B cell (primary cell): ENCODE measurements at regions of chr12 and their contacts with region 1.

Region 1: GRCh38 chr12:101759396-101760047 is 20.3 kb upstream of the SYCP3 start:
- DNase-seq: peak; percentile 62
- ATAC-seq: peak; percentile 72
- H3K4me3 ChIP-seq: no peak overlapping the region
- H3K4me3 Mint-ChIP-seq: no peak overlapping the region
- H3K27ac ChIP-seq: no peak overlapping the region
- H3K27ac Mint-ChIP-seq: no peak overlapping the region
- H3K4me1 ChIP-seq: peaks cover 3% of the 10 kb centered on the region in 2 donors
- H3K4me1 Mint-ChIP-seq: peaks cover 20% of the 10 kb centered on the region
- H3K27me3 ChIP-seq: no peaks in the 10 kb centered on the region
- H3K27me3 Mint-ChIP-seq: no peaks in the 10 kb centered on the region
- CTCF ChIP-seq: peak; percentile 89

Region 2: DNA sequence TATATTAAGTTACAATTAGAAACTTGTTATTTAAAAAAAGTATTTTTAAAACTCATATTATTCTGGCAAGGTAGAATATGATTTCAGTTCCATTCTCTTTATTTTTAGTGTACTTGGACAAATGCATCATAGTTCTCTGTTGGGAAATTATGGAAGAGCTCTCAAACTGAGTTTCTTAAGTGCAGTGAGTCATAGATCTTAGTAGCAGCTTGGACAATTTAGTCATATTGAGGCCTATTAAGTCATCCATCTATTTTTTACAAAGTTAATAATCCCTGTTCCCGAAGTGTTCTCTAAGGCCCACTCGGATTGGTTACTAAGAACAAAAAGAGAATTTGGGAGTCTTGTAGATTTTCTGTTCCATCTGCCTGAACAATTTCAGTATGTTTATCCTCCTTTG is 851.0 kb before region 1 on chr12:
- CTCF ChIA-PET with region 1: no interaction called
- POLR2A ChIA-PET with region 1: no interaction called
- intact Hi-C with region 1: no loop called
- DNase-seq: no peak
- ATAC-seq: no peak
- H3K4me3 ChIP-seq: no peak overlapping the region
- H3K4me3 Mint-ChIP-seq: no peak overlapping the region
- H3K27ac ChIP-seq: no peak overlapping the region
- H3K27ac Mint-ChIP-seq: no peak overlapping the region
- H3K4me1 ChIP-seq: no peaks in the 10 kb centered on the region
- H3K4me1 Mint-ChIP-seq: no peaks in the 10 kb centered on the region
- H3K27me3 ChIP-seq: no peaks in the 10 kb centered on the region
- H3K27me3 Mint-ChIP-seq: no peaks in the 10 kb centered on the region
- CTCF ChIP-seq: no peak

Region 3: DNA sequence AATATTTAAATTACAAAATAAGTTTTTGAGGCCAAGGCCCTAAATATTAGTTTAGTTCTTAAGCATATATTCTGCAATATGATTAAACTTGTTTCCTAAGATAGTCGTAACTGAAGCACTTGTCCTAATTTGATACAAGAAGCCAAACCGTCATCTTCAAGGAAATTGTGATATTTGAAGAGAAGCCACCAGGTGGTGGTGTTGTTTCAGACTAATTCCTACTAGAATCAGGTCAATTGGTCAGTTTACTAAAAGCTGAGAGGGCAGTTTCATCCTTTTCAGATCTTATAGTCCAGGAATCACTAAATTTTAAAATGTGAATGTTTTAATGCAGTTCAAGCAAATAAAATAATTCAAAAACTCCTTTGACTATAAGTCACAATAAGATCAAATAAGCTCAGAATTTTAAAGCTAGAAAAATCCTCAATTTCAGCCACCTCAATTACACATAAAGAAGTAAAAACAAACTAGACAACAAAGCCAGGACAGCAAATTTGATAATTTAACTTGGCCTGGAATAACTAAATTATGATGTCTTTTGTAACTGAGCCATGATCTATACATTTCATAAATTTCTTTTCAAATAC is 344.9 kb before region 1 on chr12:
- CTCF ChIA-PET with region 1: interaction called, 14 read pairs
- POLR2A ChIA-PET with region 1: no interaction called
- intact Hi-C with region 1: loop called (anchors 1 kb)
- DNase-seq: peak; percentile 52
- ATAC-seq: no peak
- H3K4me3 ChIP-seq: no peak overlapping the region
- H3K4me3 Mint-ChIP-seq: no peak overlapping the region
- H3K27ac ChIP-seq: no peak overlapping the region
- H3K27ac Mint-ChIP-seq: no peak overlapping the region
- H3K4me1 ChIP-seq: no peaks in the 10 kb centered on the region
- H3K4me1 Mint-ChIP-seq: no peaks in the 10 kb centered on the region
- H3K27me3 ChIP-seq: peaks cover 0 to 3% (median 0%) of the 10 kb centered on the region in 4 experiments
- H3K27me3 Mint-ChIP-seq: peaks cover 5% of the 10 kb centered on the region
- CTCF ChIP-seq: peak; percentile 79

Region 4: DNA sequence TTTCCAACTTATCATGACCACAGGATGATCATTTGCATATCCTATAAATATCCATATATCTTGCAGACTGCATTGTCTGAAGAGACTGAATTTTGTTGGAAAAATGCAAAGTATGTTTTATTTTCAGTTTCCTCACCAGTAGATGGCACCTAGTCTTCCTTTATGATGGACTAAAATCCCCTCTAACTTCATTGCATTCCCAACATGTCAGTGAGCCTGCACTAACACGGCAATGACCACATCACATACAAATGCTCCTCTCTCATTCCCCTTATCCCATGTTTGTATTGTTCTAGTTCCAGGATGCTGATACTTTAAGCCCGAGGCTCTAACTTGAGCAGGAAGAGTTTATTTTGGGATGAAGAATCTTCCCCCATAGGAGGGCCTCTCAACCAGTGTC is 189.5 kb before region 1 on chr12:
- CTCF ChIA-PET with region 1: interaction called, 26 read pairs
- POLR2A ChIA-PET with region 1: no interaction called
- intact Hi-C with region 1: loop called (anchors 1 kb)
- DNase-seq: peak; percentile 53
- ATAC-seq: peak; percentile 33
- H3K4me3 ChIP-seq: peak overlapping the region in 1 of 5 experiments; percentile 22
- H3K4me3 Mint-ChIP-seq: peak overlapping the region; percentile 20
- H3K27ac ChIP-seq: no peak overlapping the region
- H3K27ac Mint-ChIP-seq: no peak overlapping the region
- H3K4me1 ChIP-seq: peaks cover 4 to 7% of the 10 kb centered on the region in 2 donors
- H3K4me1 Mint-ChIP-seq: peaks cover 4% of the 10 kb centered on the region
- H3K27me3 ChIP-seq: peaks cover 0 to 3% (median 0%) of the 10 kb centered on the region in 4 experiments
- H3K27me3 Mint-ChIP-seq: peaks cover 3% of the 10 kb centered on the region
- CTCF ChIP-seq: peak; percentile 59

Region 5: DNA sequence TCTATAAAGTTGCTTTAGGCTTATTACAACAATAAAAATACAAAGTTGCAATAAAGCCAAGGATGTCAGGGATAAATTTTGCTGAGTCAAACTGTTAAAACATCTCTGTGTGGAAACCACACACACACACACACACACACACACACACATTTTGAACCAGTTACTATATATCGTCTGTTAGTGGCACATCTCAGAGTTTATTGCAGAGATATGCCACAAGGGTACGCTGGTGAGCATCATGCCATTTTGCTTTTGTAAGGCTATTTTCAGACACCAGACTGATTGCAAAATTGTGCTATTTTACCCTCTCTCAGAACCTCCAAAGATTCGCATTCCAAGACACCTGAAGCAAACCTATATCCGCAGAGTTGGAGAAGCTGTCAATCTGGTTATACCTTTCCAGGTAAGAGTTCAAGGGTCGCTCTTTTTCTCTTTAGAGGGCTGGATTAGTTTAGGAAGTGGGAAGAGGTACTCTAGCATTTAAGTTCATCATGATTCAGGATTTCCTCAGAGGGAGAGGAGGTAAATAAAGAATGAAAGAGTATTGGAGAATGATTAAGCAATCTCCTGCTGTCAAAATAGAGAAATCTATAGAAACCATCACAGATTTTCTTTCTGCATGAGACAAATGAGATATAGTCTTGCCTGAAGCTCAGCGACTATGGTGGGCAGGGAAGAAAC is 89.4 kb before region 1 on chr12:
- CTCF ChIA-PET with region 1: interaction called, 6 read pairs
- POLR2A ChIA-PET with region 1: no interaction called
- intact Hi-C with region 1: loop called (anchors 1 kb)
- DNase-seq: peak; percentile 73
- ATAC-seq: peak; percentile 60
- H3K4me3 ChIP-seq: no peak overlapping the region
- H3K4me3 Mint-ChIP-seq: peak overlapping the region; percentile 14
- H3K27ac ChIP-seq: no peak overlapping the region
- H3K27ac Mint-ChIP-seq: peak overlapping the region; percentile 50
- H3K4me1 ChIP-seq: peaks cover 22 to 25% of the 10 kb centered on the region in 2 donors
- H3K4me1 Mint-ChIP-seq: peaks cover 22% of the 10 kb centered on the region
- H3K27me3 ChIP-seq: no peaks in the 10 kb centered on the region
- H3K27me3 Mint-ChIP-seq: peaks cover 7% of the 10 kb centered on the region
- CTCF ChIP-seq: peak; percentile 75

Region 6: GRCh38 chr12:101727133-101727532 is 32.4 kb before region 1 on chr12:
- CTCF ChIA-PET with region 1: interaction called, 16 read pairs
- POLR2A ChIA-PET with region 1: no interaction called
- intact Hi-C with region 1: loop called (anchors 5 kb)
- DNase-seq: no peak
- ATAC-seq: no peak
- H3K4me3 ChIP-seq: no peak overlapping the region
- H3K4me3 Mint-ChIP-seq: no peak overlapping the region
- H3K27ac ChIP-seq: no peak overlapping the region
- H3K27ac Mint-ChIP-seq: no peak overlapping the region
- H3K4me1 ChIP-seq: peaks cover 1 to 4% of the 10 kb centered on the region in 2 donors
- H3K4me1 Mint-ChIP-seq: peaks cover 5% of the 10 kb centered on the region
- H3K27me3 ChIP-seq: no peaks in the 10 kb centered on the region
- H3K27me3 Mint-ChIP-seq: no peaks in the 10 kb centered on the region
- CTCF ChIP-seq: no peak

Region 7: DNA sequence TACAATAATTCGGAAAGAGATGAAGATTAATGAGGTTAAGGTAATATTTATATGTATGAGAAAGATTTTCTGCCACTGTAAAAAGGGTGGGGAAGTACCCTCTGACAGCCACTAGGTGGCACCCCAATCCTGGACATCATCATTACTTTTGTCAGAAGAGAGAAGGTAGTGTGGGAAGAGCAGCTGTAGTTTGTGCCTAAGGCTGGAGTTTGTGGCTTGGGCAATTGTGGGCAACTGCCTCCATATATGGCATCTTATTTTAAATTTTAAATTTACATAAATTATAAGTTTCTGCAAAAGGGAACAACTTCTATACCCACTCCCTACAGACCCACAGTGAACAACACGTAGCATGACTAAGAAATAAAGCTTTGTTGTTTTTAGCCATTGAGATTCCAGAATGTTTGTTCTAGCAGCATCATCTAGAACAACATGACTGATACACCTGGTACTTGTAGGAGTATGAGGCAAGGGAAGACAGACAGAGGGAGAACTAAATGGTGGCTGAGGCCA is 14.2 kb after region 1 on chr12:
- CTCF ChIA-PET with region 1: interaction called, 25 read pairs
- POLR2A ChIA-PET with region 1: no interaction called
- intact Hi-C with region 1: no loop called
- DNase-seq: peak; percentile 77
- ATAC-seq: peak; percentile 86
- H3K4me3 ChIP-seq: no peak overlapping the region
- H3K4me3 Mint-ChIP-seq: no peak overlapping the region
- H3K27ac ChIP-seq: no peak overlapping the region
- H3K27ac Mint-ChIP-seq: no peak overlapping the region
- H3K4me1 ChIP-seq: no peaks in the 10 kb centered on the region
- H3K4me1 Mint-ChIP-seq: peaks cover 1% of the 10 kb centered on the region
- H3K27me3 ChIP-seq: no peaks in the 10 kb centered on the region
- H3K27me3 Mint-ChIP-seq: no peaks in the 10 kb centered on the region
- CTCF ChIP-seq: peak; percentile 98

Region 8: DNA sequence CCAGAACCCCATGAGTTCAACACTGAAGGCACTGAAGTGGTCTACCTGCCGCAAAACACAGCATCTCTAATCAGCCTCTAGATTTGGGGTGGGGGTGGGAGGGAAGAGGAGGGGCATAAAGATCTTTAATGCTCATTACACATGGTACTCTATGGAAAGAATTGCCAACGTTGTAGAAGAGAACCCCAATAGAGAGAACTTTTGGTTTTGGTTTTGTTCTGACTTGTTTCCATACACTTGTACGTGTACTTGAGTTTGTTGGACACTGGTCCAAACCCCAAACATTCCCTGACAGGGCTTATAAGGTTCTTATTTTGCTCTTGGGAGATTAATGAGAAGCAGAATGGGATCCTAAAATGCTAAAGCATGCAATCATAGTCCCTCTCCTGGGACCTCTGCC is 40.3 kb after region 1 on chr12:
- CTCF ChIA-PET with region 1: no interaction called
- POLR2A ChIA-PET with region 1: no interaction called
- intact Hi-C with region 1: no loop called
- DNase-seq: no peak
- ATAC-seq: no peak
- H3K4me3 ChIP-seq: no peak overlapping the region
- H3K4me3 Mint-ChIP-seq: no peak overlapping the region
- H3K27ac ChIP-seq: no peak overlapping the region
- H3K27ac Mint-ChIP-seq: no peak overlapping the region
- H3K4me1 ChIP-seq: peaks cover 0 to 8% of the 10 kb centered on the region in 2 donors
- H3K4me1 Mint-ChIP-seq: peaks cover 26% of the 10 kb centered on the region
- H3K27me3 ChIP-seq: no peaks in the 10 kb centered on the region
- H3K27me3 Mint-ChIP-seq: no peaks in the 10 kb centered on the region
- CTCF ChIP-seq: no peak

Region 9: DNA sequence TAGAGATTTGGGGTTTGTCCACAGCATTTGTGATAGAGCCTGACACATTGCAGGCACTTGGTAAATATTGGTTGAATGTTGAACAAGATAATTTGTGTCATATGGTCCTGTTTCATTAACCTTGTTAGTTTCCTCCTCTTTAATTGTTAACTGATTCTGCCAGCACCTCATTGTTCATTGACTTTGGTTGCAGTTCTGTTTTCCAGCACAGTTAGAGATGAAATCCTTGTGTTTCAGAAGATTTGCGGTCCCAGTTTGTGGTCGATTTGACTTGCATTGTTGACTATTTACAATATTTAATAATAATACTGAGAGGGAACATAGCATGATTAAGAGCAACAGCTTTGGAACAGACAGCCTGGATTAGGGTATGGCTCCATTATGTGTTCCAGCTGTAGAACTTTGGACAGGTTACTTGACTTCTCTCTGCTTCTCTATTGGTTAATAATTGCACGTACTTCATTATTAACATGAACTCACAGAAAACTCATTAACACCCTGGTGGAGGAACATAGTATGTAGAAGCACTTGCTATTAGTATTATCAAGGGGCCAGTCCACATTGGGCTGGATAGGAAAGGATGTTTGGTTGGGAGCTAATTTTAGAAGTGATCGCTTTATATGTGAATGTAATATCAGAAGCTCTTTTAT is 126.5 kb after region 1 on chr12:
- CTCF ChIA-PET with region 1: no interaction called
- POLR2A ChIA-PET with region 1: no interaction called
- intact Hi-C with region 1: no loop called
- DNase-seq: no peak
- ATAC-seq: no peak
- H3K4me3 ChIP-seq: no peak overlapping the region
- H3K4me3 Mint-ChIP-seq: no peak overlapping the region
- H3K27ac ChIP-seq: no peak overlapping the region
- H3K27ac Mint-ChIP-seq: no peak overlapping the region
- H3K4me1 ChIP-seq: peaks cover 0 to 3% of the 10 kb centered on the region in 2 donors
- H3K4me1 Mint-ChIP-seq: peaks cover 14% of the 10 kb centered on the region
- H3K27me3 ChIP-seq: no peaks in the 10 kb centered on the region
- H3K27me3 Mint-ChIP-seq: no peaks in the 10 kb centered on the region
- CTCF ChIP-seq: no peak

Region 10: GRCh38 chr12:101931498-101932326 is 172.2 kb after region 1 on chr12:
- CTCF ChIA-PET with region 1: no interaction called
- POLR2A ChIA-PET with region 1: no interaction called
- intact Hi-C with region 1: no loop called
- DNase-seq: peak; percentile 83
- ATAC-seq: peak; percentile 68
- H3K4me3 ChIP-seq: peak overlapping the region in 3 of 5 experiments; percentile 3 to 41 (median 25)
- H3K4me3 Mint-ChIP-seq: peak overlapping the region; percentile 33
- H3K27ac ChIP-seq: peak overlapping the region; percentile 81 to 93
- H3K27ac Mint-ChIP-seq: peak overlapping the region; percentile 88
- H3K4me1 ChIP-seq: peaks cover 76 to 79% of the 10 kb centered on the region in 2 donors
- H3K4me1 Mint-ChIP-seq: peaks cover 79% of the 10 kb centered on the region
- H3K27me3 ChIP-seq: no peaks in the 10 kb centered on the region
- H3K27me3 Mint-ChIP-seq: no peaks in the 10 kb centered on the region
- CTCF ChIP-seq: no peak